ENCODE measurements at regions of chr2 and their contacts with region 1.

Region 1: DNA sequence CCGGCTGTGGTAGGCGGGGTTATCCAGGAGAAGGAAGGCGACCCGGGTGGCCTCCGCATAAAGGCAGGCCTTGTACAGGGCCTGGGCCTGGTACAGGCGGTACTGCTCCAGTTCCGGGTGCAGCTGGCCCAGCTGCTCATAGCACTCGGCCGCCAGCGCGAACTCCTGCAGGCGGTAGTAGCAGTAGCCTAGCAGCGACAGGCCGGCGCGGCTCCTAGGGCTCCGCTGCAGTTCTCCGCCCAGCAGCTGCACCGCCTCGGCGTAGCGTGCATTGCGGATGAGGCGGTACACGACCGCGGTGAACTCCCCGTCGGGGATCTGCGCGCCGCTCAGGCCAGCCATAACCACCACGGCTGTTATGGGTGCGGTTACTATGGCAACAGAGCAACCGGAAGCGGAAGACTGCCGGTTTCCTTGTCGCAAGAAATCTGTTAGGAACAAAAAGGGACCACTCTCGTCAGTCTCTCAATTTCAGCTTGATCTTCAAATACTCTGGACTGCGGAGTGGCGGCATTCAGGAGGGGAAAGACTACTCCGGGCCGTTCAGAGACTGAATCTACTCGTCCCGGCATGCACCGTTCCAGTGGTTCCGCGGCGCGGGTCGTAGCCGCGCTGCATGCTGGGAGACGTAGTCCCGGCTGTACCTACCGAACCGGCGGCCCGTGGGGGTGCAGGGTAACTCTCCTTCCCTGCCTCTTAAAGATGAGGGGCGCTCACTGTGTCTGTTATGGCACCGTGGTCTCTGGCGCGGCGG is 160.0 kb downstream of the AGPS start:
- DNase-seq: peak; percentile 80 to 97 (median 88)
- ATAC-seq: peak; percentile 91
- H3K4me3 ChIP-seq: peak overlapping the region; percentile 71
- H3K4me3 Mint-ChIP-seq: peak overlapping the region; percentile 99
- H3K27ac ChIP-seq: peak overlapping the region; percentile 93 to 99
- H3K27ac Mint-ChIP-seq: peak overlapping the region; percentile 98
- H3K4me1 ChIP-seq: peaks cover 13% of the 10 kb centered on the region
- H3K4me1 Mint-ChIP-seq: peaks cover 17% of the 10 kb centered on the region
- H3K27me3 ChIP-seq: no peaks in the 10 kb centered on the region
- H3K27me3 Mint-ChIP-seq: peaks cover 3% of the 10 kb centered on the region
- CTCF ChIP-seq: no peak

Region 2: GRCh38 chr2:177322801-177323261 is 229.8 kb before region 1 on chr2:
- CTCF ChIA-PET with region 1: no interaction called
- POLR2A ChIA-PET with region 1: no interaction called
- intact Hi-C with region 1: no loop called
- DNase-seq: no peak
- ATAC-seq: no peak
- H3K4me3 ChIP-seq: no peak overlapping the region
- H3K4me3 Mint-ChIP-seq: no peak overlapping the region
- H3K27ac ChIP-seq: no peak overlapping the region
- H3K27ac Mint-ChIP-seq: no peak overlapping the region
- H3K4me1 ChIP-seq: peaks cover 12% of the 10 kb centered on the region
- H3K4me1 Mint-ChIP-seq: no peaks in the 10 kb centered on the region
- H3K27me3 ChIP-seq: no peaks in the 10 kb centered on the region
- H3K27me3 Mint-ChIP-seq: no peaks in the 10 kb centered on the region
- CTCF ChIP-seq: no peak

Region 3: DNA sequence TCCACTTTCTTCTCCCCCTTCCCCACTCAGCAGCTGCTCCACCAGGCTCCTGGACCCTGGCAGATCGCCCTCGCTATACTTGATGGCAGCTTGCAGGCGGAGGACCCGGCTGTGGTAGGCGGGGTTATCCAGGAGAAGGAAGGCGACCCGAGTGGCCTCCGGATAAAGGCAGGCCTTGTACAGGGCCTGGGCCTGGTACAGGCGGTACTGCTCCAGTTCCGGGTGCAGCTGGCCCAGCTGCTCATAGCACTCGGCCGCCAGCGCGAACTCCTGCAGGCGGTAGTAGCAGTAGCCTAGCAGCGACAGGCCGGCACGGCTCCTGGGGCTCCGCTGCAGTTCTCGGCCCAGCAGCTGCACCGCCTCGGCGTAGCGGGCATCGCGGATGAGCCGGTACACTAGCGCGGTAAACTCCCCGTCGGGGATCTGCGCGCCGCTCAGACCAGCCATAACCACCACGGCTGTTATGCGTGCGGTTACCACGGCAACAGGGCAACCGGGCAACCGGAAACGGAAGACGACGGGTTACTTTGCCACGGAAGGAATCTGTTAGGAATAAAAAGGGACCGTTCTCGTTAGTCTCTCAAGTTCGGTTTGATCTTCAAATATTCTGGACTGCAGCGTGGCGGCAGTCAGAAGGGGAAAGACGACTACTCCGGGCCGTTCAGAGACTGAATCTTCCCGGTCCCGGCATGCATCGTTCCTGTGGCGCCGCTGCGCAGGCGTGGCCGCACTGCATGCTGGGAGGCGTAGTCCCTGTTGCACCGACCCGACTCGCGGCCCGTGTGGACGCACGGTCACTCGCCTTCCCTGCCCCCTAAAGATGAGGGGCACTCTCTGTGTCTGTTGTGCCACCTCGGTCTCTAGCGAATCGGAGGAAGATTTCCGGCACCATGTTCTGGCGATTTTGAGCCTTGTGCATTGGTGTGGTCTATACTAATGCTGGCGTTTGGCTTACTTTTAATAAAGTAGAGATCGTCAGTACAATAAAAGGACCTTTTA is 66.0 kb after region 1 on chr2:
- CTCF ChIA-PET with region 1: no interaction called
- POLR2A ChIA-PET with region 1: no interaction called
- intact Hi-C with region 1: loop called (anchors 1 to 2 kb)
- DNase-seq: peak; percentile 83 to 96 (median 89)
- ATAC-seq: peak; percentile 89
- H3K4me3 ChIP-seq: peak overlapping the region; percentile 72
- H3K4me3 Mint-ChIP-seq: peak overlapping the region; percentile 96
- H3K27ac ChIP-seq: peak overlapping the region; percentile 89 to 98
- H3K27ac Mint-ChIP-seq: peak overlapping the region; percentile 94
- H3K4me1 ChIP-seq: peaks cover 14% of the 10 kb centered on the region
- H3K4me1 Mint-ChIP-seq: peaks cover 8% of the 10 kb centered on the region
- H3K27me3 ChIP-seq: no peaks in the 10 kb centered on the region
- H3K27me3 Mint-ChIP-seq: peaks cover 12% of the 10 kb centered on the region
- CTCF ChIP-seq: no peak

Region 4: DNA sequence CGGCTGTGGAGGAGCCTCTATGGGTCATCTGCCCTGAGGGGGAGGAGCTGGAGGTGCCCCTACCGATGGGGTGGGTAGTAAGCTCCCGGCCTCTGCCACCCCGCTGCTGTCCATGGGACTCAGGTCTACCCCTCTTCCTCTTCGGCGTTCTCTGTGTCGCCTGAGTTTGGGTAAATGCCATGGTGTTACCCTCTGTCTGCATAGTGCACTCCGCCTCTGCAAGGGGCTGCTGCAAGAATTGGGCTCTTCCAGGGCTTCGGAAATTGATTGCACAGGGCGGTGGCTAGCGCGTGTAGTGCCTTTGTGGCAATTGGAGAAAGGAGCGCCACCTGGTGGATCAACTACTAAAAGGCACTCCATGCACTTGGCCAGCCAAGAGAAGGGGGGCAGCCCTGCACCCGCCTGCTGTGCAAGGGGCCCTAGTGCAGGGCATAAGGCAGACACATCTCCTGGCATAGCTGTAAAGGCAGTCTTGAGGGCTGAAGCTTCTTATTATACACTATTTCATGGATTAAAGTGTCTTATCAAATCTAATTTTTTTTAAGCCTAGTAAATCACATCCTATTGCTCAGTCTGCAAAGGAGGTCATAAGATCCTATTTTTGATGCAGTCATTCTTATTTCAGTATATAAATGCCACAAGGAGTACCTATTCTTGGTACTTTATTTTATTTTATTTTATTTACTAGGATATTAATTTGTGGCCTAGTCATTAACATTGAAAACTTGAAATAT is 211.1 kb after region 1 on chr2:
- CTCF ChIA-PET with region 1: no interaction called
- POLR2A ChIA-PET with region 1: no interaction called
- intact Hi-C with region 1: loop called in 1 of 2 experiments (anchors 1 kb)
- DNase-seq: peak; percentile 59 to 85 (median 70)
- ATAC-seq: peak; percentile 98
- H3K4me3 ChIP-seq: no peak overlapping the region
- H3K4me3 Mint-ChIP-seq: no peak overlapping the region
- H3K27ac ChIP-seq: no peak overlapping the region
- H3K27ac Mint-ChIP-seq: no peak overlapping the region
- H3K4me1 ChIP-seq: peaks cover 6% of the 10 kb centered on the region
- H3K4me1 Mint-ChIP-seq: peaks cover 3% of the 10 kb centered on the region
- H3K27me3 ChIP-seq: no peaks in the 10 kb centered on the region
- H3K27me3 Mint-ChIP-seq: peaks cover 32% of the 10 kb centered on the region
- CTCF ChIP-seq: peak; percentile 87